ENCODE measurements at regions of chr7 and their contacts with region 1.

Region 1: DNA sequence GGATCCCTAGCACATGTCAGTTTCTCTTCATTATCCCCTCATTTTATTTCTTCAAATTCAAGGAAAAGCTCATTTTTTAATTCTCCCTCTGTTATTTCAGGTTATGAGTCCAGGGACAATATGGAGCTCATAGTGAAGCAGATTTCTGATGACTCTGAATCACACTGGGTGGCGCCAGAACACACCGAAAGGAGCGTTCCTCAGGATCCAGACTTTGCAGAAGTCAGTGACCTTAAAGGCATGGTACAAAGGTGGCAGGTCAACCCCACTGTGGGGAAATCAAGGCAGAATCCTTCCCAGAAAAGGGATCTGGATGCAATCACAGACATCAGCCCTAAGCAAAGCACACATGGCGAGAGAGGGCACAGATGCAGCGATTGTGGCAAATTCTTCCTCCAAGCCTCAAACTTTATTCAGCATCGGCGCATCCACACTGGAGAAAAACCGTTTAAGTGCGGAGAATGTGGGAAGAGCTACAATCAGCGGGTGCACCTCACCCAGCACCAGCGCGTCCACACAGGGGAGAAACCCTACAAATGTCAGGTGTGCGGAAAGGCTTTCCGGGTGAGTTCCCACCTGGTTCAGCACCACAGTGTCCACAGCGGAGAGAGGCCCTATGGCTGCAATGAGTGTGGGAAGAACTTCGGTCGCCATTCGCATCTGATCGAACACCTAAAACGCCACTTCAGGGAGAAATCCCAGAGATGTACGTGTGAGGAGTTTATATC is 21.4 kb downstream of the ZKSCAN5 start:
- DNase-seq: peak in 1 of 2 experiments; percentile 38
- ATAC-seq: peak; percentile 59 to 77; a peak in 4 of 6 replicates
- H3K4me3 ChIP-seq: no peak overlapping the region
- H3K27ac ChIP-seq: no peak overlapping the region
- H3K4me1 ChIP-seq: no peaks in the 10 kb centered on the region
- CTCF ChIP-seq: no peak
- EP300 ChIP-seq: no peak
- POLR2A ChIP-seq: no peak
- RAD21 ChIP-seq: peak; percentile 35 to 72; a peak in 4 of 5 replicates

Region 2: DNA sequence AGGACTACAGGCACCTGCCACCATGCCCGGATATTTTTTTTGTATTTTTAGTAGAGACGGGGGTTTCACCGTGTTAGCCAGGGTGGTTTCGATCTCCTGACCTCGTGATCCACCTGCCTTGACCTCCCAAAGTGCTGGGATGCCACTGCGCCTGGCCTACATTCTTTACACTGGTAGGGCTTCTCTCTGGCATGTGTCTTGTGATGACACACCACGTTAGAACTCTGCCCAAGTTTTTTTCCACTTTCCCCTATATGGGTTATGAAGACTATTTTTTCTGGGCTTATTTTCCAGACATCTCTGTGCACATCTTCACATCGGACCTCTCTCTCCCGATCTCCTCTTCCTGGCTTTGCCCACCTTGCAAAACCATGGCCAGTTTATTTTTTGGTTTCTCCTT is 15.3 kb after region 1 on chr7:
- CTCF ChIA-PET with region 1: interaction called, 11 read pairs
- POLR2A ChIA-PET with region 1: no interaction called
- DNase-seq: no peak
- ATAC-seq: no peak
- H3K4me3 ChIP-seq: no peak overlapping the region
- H3K27ac ChIP-seq: no peak overlapping the region
- H3K4me1 ChIP-seq: no peaks in the 10 kb centered on the region
- CTCF ChIP-seq: no peak
- EP300 ChIP-seq: no peak
- POLR2A ChIP-seq: no peak
- RAD21 ChIP-seq: no peak

Region 3: DNA sequence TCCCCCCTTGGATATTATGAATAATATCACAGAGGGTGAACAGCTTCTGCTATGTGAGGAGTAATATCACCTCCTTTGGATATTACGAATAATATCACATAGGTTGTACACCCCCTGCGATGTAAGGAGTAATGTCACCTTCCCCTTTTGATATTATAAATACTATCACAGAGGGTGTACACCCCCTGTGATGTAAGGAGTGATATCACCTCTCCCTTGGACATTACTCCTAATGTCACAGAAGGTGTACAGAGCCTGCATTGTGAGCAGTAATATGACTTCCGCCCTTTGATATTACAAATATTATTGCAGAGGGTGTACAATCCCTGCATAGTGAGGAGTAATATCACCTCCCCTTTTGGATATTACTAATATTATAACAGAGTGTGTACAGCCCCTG is 63.0 kb after region 1 on chr7:
- CTCF ChIA-PET with region 1: no interaction called
- POLR2A ChIA-PET with region 1: no interaction called
- DNase-seq: no peak
- ATAC-seq: no peak
- H3K4me3 ChIP-seq: no peak overlapping the region
- H3K27ac ChIP-seq: no peak overlapping the region
- H3K4me1 ChIP-seq: no peaks in the 10 kb centered on the region
- CTCF ChIP-seq: no peak
- EP300 ChIP-seq: no peak
- POLR2A ChIP-seq: no peak
- RAD21 ChIP-seq: no peak

Measured in A549 (cell line).